Pancreas (tissue), 10 donors: ENCODE measurements at regions of chr6 and their contacts with region 1.

Region 1: DNA sequence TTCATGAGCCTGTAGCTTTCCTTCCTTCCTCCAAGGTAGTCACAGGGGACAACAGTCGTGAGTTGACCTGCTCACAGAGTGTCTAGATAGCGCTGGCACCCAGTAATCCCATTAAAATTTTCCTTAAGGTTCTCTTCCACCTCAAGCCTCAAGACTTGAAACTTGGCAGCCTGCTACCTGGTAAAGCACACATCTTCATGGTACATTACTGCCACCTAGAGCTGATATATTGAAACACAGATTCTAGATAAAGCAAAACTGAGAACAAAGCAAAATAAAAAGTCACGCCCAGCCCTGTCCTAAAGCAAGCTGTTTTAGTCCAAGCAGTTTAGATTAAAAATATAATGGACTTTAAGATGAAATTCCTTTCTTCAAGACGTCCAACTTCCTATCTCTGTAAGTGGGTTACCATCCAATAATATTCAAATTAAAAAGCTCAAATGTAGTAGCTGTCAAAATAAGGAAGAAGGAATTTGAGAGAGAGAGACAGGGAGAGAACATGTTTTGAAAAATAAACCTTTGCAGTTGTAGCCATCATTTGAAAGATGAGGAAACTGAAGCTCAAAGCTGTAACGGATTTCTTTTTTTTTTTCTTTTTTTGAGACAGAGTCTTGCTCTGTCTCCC is 50.7 kb upstream of the CD83 start:
- DNase-seq: peak in 1 of 6 donors; percentile 22
- ATAC-seq: peak; percentile 78 to 94 (median 92)
- H3K4me3 ChIP-seq: no peak overlapping the region
- H3K27ac ChIP-seq: no peak overlapping the region
- H3K4me1 ChIP-seq: no peaks in the 10 kb centered on the region
- H3K27me3 ChIP-seq: peaks cover 0 to 16% (median 0%) of the 10 kb centered on the region in 4 donors
- CTCF ChIP-seq: peak in 3 of 4 donors; percentile 34 to 63 (median 55)

Region 2: GRCh38 chr6:13795041-13795750 is 271.7 kb before region 1 on chr6:
- intact Hi-C with region 1: loop called in 1 of 3 experiments (anchors 10 kb)
- DNase-seq: peak; percentile 53 to 88 (median 73)
- ATAC-seq: peak; percentile 84 to 96 (median 96)
- H3K4me3 ChIP-seq: no peak overlapping the region
- H3K27ac ChIP-seq: no peak overlapping the region
- H3K4me1 ChIP-seq: no peaks in the 10 kb centered on the region
- H3K27me3 ChIP-seq: no peaks in the 10 kb centered on the region
- CTCF ChIP-seq: peak; percentile 76 to 91 (median 84)

Region 3: DNA sequence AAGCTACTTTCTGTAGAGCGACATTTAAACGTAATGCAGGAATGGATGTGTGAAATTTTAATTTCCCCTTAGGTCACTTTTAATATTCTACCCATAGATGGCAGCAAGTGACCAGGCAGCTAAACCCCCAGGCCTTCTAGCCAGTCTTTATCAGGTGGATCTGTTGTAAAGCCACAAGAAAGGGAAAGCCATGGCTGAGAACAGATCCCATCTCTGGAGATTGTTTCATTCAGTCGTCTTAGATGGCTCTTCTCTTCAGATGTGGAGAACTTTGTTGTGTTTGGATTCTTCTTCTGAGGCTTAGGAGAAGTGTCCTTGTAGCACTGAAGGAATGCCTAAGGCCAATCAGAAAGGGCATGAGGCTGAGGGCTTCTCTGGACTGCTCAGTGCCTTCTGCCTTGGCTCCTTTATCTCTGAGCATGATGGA is 157.9 kb before region 1 on chr6:
- intact Hi-C with region 1: loop called in 1 of 3 experiments (anchors 10 kb)
- DNase-seq: peak in 4 of 6 donors; percentile 14 to 44 (median 29)
- ATAC-seq: peak; percentile 58 to 94 (median 92)
- H3K4me3 ChIP-seq: no peak overlapping the region
- H3K27ac ChIP-seq: no peak overlapping the region
- H3K4me1 ChIP-seq: no peaks in the 10 kb centered on the region
- H3K27me3 ChIP-seq: peaks cover 0 to 5% (median 2%) of the 10 kb centered on the region in 4 donors
- CTCF ChIP-seq: peak; percentile 30 to 60 (median 60)

Region 4: GRCh38 chr6:13916230-13916944 is 150.5 kb before region 1 on chr6:
- intact Hi-C with region 1: loop called in 1 of 3 experiments (anchors 5 kb)
- DNase-seq: no peak
- ATAC-seq: peak in 2 of 4 donors; percentile 29 to 55
- H3K4me3 ChIP-seq: no peak overlapping the region
- H3K27ac ChIP-seq: no peak overlapping the region
- H3K4me1 ChIP-seq: no peaks in the 10 kb centered on the region
- H3K27me3 ChIP-seq: peaks cover 0 to 5% (median 0%) of the 10 kb centered on the region in 4 donors
- CTCF ChIP-seq: no peak

Region 5: DNA sequence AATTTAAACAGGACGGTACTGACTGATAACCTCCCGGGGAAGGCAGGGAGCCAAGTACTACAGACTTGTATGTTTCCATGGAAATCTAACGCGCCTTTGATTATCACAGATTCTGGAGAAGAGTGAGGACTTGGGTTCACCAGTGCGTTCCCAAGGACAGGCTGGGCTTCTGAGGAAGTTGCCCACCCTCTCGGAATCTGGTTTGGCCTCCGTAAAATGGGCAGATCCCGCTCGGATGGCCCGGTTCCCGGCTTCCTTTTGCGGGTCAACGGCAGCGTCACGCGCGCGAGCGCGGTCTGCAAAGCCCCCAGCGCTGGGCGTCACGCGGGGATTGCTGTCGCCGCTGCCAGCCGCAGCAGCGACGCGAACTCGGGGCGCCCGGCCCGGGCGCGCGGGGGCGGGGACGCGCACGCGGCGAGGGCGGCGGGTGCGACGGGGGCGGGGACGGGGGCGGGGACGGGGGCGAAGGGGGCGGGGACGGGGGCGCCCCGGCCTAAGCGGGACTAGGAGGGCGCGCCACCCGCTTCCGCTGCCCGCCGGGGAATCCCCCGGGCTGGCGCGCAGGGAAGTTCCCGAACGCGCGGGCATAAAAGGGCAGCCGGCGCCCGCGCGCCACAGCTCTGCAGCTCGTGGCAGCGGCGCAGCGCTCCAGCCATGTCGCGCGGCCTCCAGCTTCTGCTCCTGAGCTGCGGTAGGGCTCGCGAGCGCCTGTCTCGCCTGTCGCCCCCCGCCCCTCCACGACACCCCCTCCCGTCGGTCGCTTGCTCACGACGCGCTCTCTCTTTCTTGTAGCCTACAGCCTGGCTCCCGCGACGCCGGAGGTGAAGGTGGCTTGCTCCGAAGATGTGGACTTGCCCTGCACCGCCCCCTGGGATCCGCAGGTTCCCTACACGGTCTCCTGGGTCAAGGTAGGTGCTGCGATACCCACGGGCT is 50.5 kb after region 1 on chr6 and contains the start of gene CD83:
- intact Hi-C with region 1: no loop called
- DNase-seq: peak; percentile 65 to 88 (median 76)
- ATAC-seq: peak; percentile 94 to 96 (median 95)
- H3K4me3 ChIP-seq: peak within 1 kb of the TSS; percentile 56 to 75 (median 67)
- H3K27ac ChIP-seq: peak within 1 kb of the TSS in 2 of 4 donors; percentile 58
- H3K4me1 ChIP-seq: peaks cover 0 to 3% (median 0%) of the 10 kb centered on the region in 3 donors
- H3K27me3 ChIP-seq: no peaks in the 10 kb centered on the region
- CTCF ChIP-seq: no peak
- total RNA-seq, gene CD83: 0.83 to 5.1 (median 1.3) TPM